B cell (primary cell): ENCODE measurements at regions of chr1 and their contacts with region 1.

Region 1: DNA sequence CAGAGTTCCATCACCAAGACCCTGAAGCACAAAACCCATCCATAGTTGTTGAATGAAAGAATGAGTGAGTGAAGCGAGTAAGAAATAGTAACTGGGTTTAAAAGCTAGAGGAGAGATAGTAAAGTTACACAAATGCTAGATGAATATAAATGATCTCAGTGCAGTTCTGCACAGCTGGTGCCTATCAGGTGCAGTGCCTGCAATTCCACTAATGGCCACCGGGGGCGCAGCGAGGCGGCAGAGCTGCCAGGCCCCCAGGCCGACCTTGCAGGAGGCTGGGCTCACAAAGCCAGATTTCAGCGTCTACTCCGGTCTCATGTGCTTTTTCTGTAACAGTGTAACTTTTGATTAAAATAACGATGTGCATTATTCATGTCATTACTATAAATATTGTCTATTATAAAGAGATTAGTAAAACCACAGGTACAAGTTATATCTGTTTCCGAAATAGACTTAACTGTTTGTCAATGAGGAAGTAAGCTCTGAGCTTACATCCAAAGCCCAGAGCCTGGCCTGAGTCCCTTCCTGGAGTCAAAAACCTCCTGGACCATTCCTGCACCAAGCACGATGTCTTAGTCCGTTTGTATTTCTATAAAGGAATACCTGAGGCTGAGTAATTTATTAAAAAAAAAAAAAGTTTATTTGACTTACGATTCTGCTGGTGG is 477.6 kb downstream of the NPHP4 start:
- DNase-seq: peak; percentile 65
- ATAC-seq: no peak
- H3K4me3 ChIP-seq: no peak overlapping the region
- H3K4me3 Mint-ChIP-seq: no peak overlapping the region
- H3K27ac ChIP-seq: no peak overlapping the region
- H3K27ac Mint-ChIP-seq: no peak overlapping the region
- H3K4me1 ChIP-seq: no peaks in the 10 kb centered on the region
- H3K4me1 Mint-ChIP-seq: no peaks in the 10 kb centered on the region
- H3K27me3 ChIP-seq: peaks cover 0 to 5% (median 0%) of the 10 kb centered on the region in 4 experiments
- H3K27me3 Mint-ChIP-seq: peaks cover 27% of the 10 kb centered on the region
- CTCF ChIP-seq: peak; percentile 100

Region 2: DNA sequence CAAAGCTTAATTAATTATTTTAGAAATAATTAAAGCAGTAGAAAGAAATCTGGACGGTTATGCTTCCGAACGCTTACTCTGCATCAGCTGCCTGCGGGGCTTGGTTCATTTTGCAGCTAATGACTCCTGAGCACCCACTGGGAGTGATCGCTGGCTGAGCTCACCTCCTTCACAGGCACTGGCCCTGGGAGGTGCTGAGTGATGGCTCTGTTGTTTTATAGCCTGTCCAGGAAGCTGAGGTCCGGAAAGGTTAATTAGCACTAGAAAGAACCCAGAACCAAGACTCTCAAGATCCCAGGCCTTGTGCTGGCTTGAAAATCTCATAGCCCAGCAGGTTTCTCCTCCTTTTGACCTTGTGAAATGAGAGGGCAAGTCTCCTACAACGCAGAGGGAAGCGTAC is 634.0 kb before region 1 on chr1:
- CTCF ChIA-PET with region 1: no interaction called
- POLR2A ChIA-PET with region 1: no interaction called
- intact Hi-C with region 1: no loop called
- DNase-seq: no peak
- ATAC-seq: no peak
- H3K4me3 ChIP-seq: no peak overlapping the region
- H3K4me3 Mint-ChIP-seq: no peak overlapping the region
- H3K27ac ChIP-seq: no peak overlapping the region
- H3K27ac Mint-ChIP-seq: no peak overlapping the region
- H3K4me1 ChIP-seq: no peaks in the 10 kb centered on the region
- H3K4me1 Mint-ChIP-seq: no peaks in the 10 kb centered on the region
- H3K27me3 ChIP-seq: peaks cover 0 to 2% (median 0%) of the 10 kb centered on the region in 4 experiments
- H3K27me3 Mint-ChIP-seq: peaks cover 3% of the 10 kb centered on the region
- CTCF ChIP-seq: no peak

Region 3: GRCh38 chr1:5477716-5478115 is 36.9 kb before region 1 on chr1:
- CTCF ChIA-PET with region 1: no interaction called
- POLR2A ChIA-PET with region 1: no interaction called
- intact Hi-C with region 1: no loop called
- DNase-seq: no peak
- ATAC-seq: no peak
- H3K4me3 ChIP-seq: no peak overlapping the region
- H3K4me3 Mint-ChIP-seq: no peak overlapping the region
- H3K27ac ChIP-seq: no peak overlapping the region
- H3K27ac Mint-ChIP-seq: no peak overlapping the region
- H3K4me1 ChIP-seq: no peaks in the 10 kb centered on the region
- H3K4me1 Mint-ChIP-seq: no peaks in the 10 kb centered on the region
- H3K27me3 ChIP-seq: no peaks in the 10 kb centered on the region
- H3K27me3 Mint-ChIP-seq: peaks cover 2% of the 10 kb centered on the region
- CTCF ChIP-seq: no peak

Region 4: GRCh38 chr1:5504354-5504720 is 10.3 kb before region 1 on chr1:
- CTCF ChIA-PET with region 1: interaction called, 30 read pairs
- POLR2A ChIA-PET with region 1: no interaction called
- intact Hi-C with region 1: no loop called
- DNase-seq: no peak
- ATAC-seq: no peak
- H3K4me3 ChIP-seq: no peak overlapping the region
- H3K4me3 Mint-ChIP-seq: no peak overlapping the region
- H3K27ac ChIP-seq: no peak overlapping the region
- H3K27ac Mint-ChIP-seq: no peak overlapping the region
- H3K4me1 ChIP-seq: no peaks in the 10 kb centered on the region
- H3K4me1 Mint-ChIP-seq: no peaks in the 10 kb centered on the region
- H3K27me3 ChIP-seq: no peaks in the 10 kb centered on the region
- H3K27me3 Mint-ChIP-seq: no peaks in the 10 kb centered on the region
- CTCF ChIP-seq: no peak

Region 5: GRCh38 chr1:5525597-5526384 is 11.1 kb after region 1 on chr1:
- CTCF ChIA-PET with region 1: interaction called, 11 read pairs
- POLR2A ChIA-PET with region 1: no interaction called
- intact Hi-C with region 1: no loop called
- DNase-seq: no peak
- ATAC-seq: no peak
- H3K4me3 ChIP-seq: no peak overlapping the region
- H3K4me3 Mint-ChIP-seq: no peak overlapping the region
- H3K27ac ChIP-seq: no peak overlapping the region
- H3K27ac Mint-ChIP-seq: no peak overlapping the region
- H3K4me1 ChIP-seq: no peaks in the 10 kb centered on the region
- H3K4me1 Mint-ChIP-seq: no peaks in the 10 kb centered on the region
- H3K27me3 ChIP-seq: peaks cover 0 to 5% (median 0%) of the 10 kb centered on the region in 4 experiments
- H3K27me3 Mint-ChIP-seq: peaks cover 11% of the 10 kb centered on the region
- CTCF ChIP-seq: no peak

Region 6: GRCh38 chr1:5740865-5741860 is 226.5 kb after region 1 on chr1:
- CTCF ChIA-PET with region 1: no interaction called
- POLR2A ChIA-PET with region 1: no interaction called
- intact Hi-C with region 1: no loop called
- DNase-seq: no peak
- ATAC-seq: no peak
- H3K4me3 ChIP-seq: no peak overlapping the region
- H3K4me3 Mint-ChIP-seq: no peak overlapping the region
- H3K27ac ChIP-seq: no peak overlapping the region
- H3K27ac Mint-ChIP-seq: no peak overlapping the region
- H3K4me1 ChIP-seq: no peaks in the 10 kb centered on the region
- H3K4me1 Mint-ChIP-seq: no peaks in the 10 kb centered on the region
- H3K27me3 ChIP-seq: peaks cover 0 to 9% (median 0%) of the 10 kb centered on the region in 4 experiments
- H3K27me3 Mint-ChIP-seq: peaks cover 12% of the 10 kb centered on the region
- CTCF ChIP-seq: no peak

Region 7: GRCh38 chr1:5915587-5916571 is 401.2 kb after region 1 on chr1:
- CTCF ChIA-PET with region 1: interaction called, 22 read pairs
- POLR2A ChIA-PET with region 1: no interaction called
- intact Hi-C with region 1: no loop called
- DNase-seq: peak; percentile 48
- ATAC-seq: no peak
- H3K4me3 ChIP-seq: no peak overlapping the region
- H3K4me3 Mint-ChIP-seq: no peak overlapping the region
- H3K27ac ChIP-seq: no peak overlapping the region
- H3K27ac Mint-ChIP-seq: no peak overlapping the region
- H3K4me1 ChIP-seq: no peaks in the 10 kb centered on the region
- H3K4me1 Mint-ChIP-seq: peaks cover 4% of the 10 kb centered on the region
- H3K27me3 ChIP-seq: no peaks in the 10 kb centered on the region
- H3K27me3 Mint-ChIP-seq: no peaks in the 10 kb centered on the region
- CTCF ChIP-seq: peak; percentile 76

Region 8: DNA sequence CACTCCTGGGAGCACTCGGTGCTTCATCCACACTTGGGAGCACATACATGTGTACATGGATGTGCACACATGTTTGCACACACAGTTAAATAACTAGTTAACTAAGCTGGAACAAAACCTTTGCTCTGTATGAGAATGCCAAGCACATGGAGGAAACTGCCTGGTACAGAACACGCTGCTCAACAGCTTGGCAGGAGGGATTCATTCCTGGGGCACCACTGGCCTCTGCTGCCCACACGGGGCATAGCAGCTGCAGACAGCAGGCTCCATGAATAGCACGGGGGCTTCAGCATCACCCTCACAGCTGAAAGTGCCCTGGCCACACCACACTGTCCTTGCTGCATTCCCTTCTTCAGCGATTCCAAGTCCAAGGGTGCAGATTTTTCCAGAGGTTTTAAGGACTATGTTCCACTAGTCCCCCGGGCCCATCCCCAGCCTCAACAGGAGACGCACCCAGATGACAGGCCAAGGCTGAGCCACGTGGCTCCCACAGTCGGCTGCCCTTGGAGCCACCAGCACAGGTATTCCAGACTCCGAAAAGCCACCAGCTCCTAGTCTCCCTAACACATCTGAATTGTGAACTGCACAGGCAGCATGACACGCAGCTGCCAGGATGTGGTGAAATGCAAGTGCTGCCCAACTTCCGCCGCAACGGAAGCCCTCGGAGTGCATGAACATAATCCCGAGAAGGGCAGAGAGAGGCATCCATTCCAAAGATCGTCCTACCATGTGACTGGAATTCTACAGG is 460.7 kb after region 1 on chr1:
- CTCF ChIA-PET with region 1: interaction called, 62 read pairs
- POLR2A ChIA-PET with region 1: no interaction called
- intact Hi-C with region 1: no loop called
- DNase-seq: peak; percentile 66
- ATAC-seq: peak; percentile 51
- H3K4me3 ChIP-seq: no peak overlapping the region
- H3K4me3 Mint-ChIP-seq: no peak overlapping the region
- H3K27ac ChIP-seq: no peak overlapping the region
- H3K27ac Mint-ChIP-seq: no peak overlapping the region
- H3K4me1 ChIP-seq: peaks cover 0 to under 1% of the 10 kb centered on the region in 2 donors
- H3K4me1 Mint-ChIP-seq: peaks cover 2% of the 10 kb centered on the region
- H3K27me3 ChIP-seq: no peaks in the 10 kb centered on the region
- H3K27me3 Mint-ChIP-seq: no peaks in the 10 kb centered on the region
- CTCF ChIP-seq: peak; percentile 76